ENCODE measurements at regions of chr2 and their contacts with region 1.

Region 1: DNA sequence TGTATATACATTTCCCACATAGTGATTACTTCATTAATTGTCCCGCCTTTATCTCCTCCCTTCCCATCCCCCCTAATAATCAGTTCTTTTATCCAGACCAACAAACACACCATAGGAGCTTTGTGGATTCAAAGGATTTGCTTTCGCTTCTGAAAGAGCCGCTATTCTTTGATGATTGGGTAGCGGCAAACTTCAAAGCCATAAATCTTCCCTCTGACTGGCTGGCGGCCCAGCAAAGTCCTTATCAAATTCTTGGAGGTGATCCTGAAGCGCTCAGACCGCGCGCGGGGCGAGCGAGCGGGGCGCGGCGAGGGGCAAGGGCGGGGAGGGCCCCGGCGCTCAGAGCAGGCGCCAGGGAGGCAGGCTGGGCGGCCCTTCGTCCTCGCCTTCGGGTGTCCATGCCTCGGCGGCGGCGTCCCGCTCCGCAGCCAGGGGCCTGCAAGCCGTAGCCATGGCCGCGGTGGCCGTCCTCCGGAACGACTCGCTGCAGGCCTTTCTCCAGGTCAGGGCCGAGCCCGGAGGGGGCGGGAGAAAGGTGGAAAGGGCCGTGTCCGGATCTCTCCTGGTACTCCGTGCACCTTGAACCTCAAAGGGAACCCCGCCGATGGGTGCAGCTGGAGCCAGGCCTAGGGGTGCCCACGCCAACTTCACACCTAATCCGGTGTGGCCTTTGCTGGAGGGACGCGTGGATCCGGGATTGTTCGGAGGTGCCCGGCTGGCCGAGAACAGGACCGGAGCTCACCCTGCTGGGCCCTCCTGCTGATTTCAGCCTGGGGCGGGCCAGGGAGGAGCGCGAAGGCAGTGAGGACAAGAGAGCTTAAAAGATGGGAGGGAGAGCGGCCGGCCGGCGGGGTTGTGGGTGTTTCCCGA is at the start of gene SP5:
- DNase-seq: peak in 4 of 5 donors; percentile 19 to 71 (median 34)
- ATAC-seq: peak in 3 of 4 donors; percentile 46 to 59 (median 47)
- H3K4me3 ChIP-seq: peak within 1 kb of the TSS; percentile 42 to 63 (median 54)
- H3K27ac ChIP-seq: peak within 1 kb of the TSS in 5 of 12 donors; percentile 2 to 40 (median 36)
- H3K4me1 ChIP-seq: peaks cover 0 to 50% (median 26%) of the 10 kb centered on the region in 12 donors
- H3K27me3 ChIP-seq: peaks cover 49 to 100% (median 93%) of the 10 kb centered on the region in 9 donors
- CTCF ChIP-seq: peak in 1 of 12 donors; percentile 9
- POLR2A ChIP-seq: no peak
- total RNA-seq, gene SP5: 0.16 to 1.4 (median 0.28) TPM in 5 of 9 donors, not detected in the others

Region 2: DNA sequence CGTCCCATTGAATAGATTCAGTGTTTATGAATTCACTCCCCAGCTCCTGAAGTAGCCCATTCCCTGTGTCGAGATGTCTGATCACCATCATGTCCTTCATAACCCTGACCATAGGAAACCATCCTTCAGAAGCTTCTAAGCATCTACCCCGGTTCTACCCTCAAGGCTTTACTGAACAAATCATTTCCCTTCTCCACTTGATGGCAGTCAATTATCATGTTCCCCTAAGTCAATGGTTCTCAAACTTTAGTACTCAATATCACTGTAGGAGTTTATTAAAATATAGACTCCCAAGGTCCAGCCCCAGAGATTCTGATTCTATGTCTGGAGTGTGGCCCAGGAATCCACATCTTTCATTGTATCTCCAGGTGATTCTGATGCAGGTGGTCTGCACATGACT is 228.6 kb before region 1 on chr2:
- intact Hi-C with region 1: loop called in 5 of 10 experiments (anchors 5 to 10 kb)
- DNase-seq: no peak
- ATAC-seq: peak in 2 of 4 donors; percentile 48 to 50
- H3K4me3 ChIP-seq: no peak overlapping the region
- H3K27ac ChIP-seq: no peak overlapping the region
- H3K4me1 ChIP-seq: no peaks in the 10 kb centered on the region
- H3K27me3 ChIP-seq: no peaks in the 10 kb centered on the region
- CTCF ChIP-seq: peak in 8 of 12 donors; percentile 23 to 57 (median 42)
- POLR2A ChIP-seq: no peak

Region 3: DNA sequence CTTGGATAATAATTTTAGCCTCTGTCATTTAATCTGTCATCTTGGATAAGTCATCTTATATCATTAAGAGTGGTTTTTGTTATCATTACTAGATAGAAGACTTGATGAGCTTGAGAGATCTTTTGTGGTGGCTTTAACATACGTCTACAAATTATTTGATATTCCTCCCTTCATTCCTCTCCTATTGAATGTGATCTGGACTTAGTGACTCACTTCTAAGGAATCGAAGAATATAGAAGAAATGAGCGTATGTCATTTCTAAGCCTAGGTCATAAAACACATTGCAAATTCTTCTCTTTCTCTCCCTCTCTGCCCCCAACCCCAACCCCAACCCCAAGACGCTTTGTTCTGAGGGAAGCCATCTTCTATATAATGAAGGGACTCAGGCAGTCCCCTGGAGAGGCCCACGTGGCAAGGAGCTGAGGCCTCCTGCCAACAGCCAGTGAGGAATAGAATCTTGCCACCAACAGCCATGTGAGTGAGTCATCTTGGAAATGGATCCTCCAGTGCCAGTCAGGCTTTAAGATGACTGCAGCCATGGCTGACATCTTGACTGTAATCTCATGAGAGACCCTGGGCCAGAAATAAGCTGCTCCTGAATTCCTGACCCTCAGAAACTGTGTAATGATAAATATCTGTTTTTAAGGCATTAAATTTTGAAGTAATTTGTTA is 221.7 kb before region 1 on chr2:
- intact Hi-C with region 1: loop called in 5 of 10 experiments (anchors 5 to 10 kb)
- DNase-seq: no peak
- ATAC-seq: no peak
- H3K4me3 ChIP-seq: no peak overlapping the region
- H3K27ac ChIP-seq: no peak overlapping the region
- H3K4me1 ChIP-seq: no peaks in the 10 kb centered on the region
- H3K27me3 ChIP-seq: peaks cover 0 to 10% (median 0%) of the 10 kb centered on the region in 9 donors
- CTCF ChIP-seq: no peak
- POLR2A ChIP-seq: no peak

Region 4: DNA sequence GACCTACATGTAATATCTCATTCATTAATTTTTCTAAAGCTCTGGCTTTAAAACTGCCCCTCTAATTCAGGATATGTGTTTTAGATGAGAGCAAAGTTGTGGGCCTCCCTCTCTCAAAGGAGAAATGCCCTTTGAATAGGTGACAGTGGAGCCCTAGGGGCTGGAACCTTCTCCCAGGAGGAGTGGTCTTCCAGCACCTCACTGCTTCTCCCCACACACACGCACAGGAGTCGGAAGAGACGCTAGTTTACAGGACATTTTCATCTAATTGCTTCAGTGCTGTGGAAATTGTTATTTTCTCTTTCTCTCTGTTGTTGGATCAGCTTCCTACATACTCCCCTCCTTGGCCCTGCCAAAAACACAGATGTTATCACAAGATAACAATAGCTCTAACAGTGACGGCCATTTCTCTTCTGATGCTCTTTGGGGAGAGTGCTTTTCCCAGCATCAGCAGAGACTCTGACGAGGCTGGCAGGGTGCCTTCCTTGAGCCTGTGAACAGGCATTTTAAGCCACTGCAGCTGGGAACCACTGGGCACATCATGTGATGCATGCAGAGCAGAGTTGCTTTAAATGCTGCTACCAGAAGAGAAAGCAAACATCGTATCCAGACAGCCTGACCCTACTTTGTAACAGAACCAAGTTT is 209.5 kb before region 1 on chr2:
- intact Hi-C with region 1: loop called in 2 of 10 experiments (anchors 10 kb)
- DNase-seq: peak; percentile 47 to 72 (median 63)
- ATAC-seq: peak; percentile 51 to 83 (median 70)
- H3K4me3 ChIP-seq: peak overlapping the region in 7 of 12 donors; percentile 12 to 29 (median 20)
- H3K27ac ChIP-seq: peak overlapping the region; percentile 6 to 71 (median 46)
- H3K4me1 ChIP-seq: peaks cover 0 to 44% (median 17%) of the 10 kb centered on the region in 12 donors
- H3K27me3 ChIP-seq: peaks cover 0 to 5% (median 0%) of the 10 kb centered on the region in 9 donors
- CTCF ChIP-seq: no peak
- POLR2A ChIP-seq: no peak

Region 5: DNA sequence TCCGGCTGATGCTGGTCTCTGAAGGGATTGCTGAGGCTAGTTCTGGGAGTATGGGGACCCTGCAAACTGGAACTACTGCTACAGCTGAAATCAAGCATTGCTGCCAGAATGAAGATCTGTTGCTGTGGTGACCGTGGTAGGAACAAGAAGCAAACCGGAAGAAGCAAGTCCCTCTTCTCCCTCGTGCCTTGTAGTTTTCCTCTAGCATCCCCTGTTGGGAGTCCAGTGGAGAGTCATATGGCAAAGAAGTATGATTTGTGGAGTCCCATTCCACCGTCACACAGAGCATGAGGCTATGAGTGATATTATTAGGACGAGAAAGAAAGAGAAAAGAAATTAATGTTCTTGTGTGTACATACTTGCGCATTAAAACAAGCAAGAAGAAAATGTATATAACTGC is 139.0 kb before region 1 on chr2:
- intact Hi-C with region 1: no loop called
- DNase-seq: no peak
- ATAC-seq: no peak
- H3K4me3 ChIP-seq: no peak overlapping the region
- H3K27ac ChIP-seq: no peak overlapping the region
- H3K4me1 ChIP-seq: no peaks in the 10 kb centered on the region
- H3K27me3 ChIP-seq: peaks cover 0 to 6% (median 0%) of the 10 kb centered on the region in 9 donors
- CTCF ChIP-seq: peak in 2 of 12 donors; percentile 7 to 12
- POLR2A ChIP-seq: no peak

Region 6: GRCh38 chr2:170770606-170771420 is 55.5 kb after region 1 on chr2:
- intact Hi-C with region 1: no loop called
- DNase-seq: peak; percentile 67 to 90 (median 78)
- ATAC-seq: peak; percentile 90 to 98 (median 96)
- H3K4me3 ChIP-seq: peak overlapping the region; percentile 43 to 91 (median 66)
- H3K27ac ChIP-seq: peak overlapping the region in 8 of 12 donors; percentile 16 to 77 (median 60)
- H3K4me1 ChIP-seq: peaks cover 0 to 15% (median 10%) of the 10 kb centered on the region in 12 donors
- H3K27me3 ChIP-seq: peaks cover 0 to 17% (median 0%) of the 10 kb centered on the region in 9 donors
- CTCF ChIP-seq: no peak
- POLR2A ChIP-seq: no peak

Region 7: GRCh38 chr2:171163261-171163660 is 448.0 kb after region 1 on chr2:
- intact Hi-C with region 1: no loop called
- DNase-seq: no peak
- ATAC-seq: no peak
- H3K4me3 ChIP-seq: no peak overlapping the region
- H3K27ac ChIP-seq: peak overlapping the region in 1 of 12 donors; percentile 54
- H3K4me1 ChIP-seq: peaks cover 0 to 33% (median 8%) of the 10 kb centered on the region in 12 donors
- H3K27me3 ChIP-seq: no peaks in the 10 kb centered on the region
- CTCF ChIP-seq: no peak
- POLR2A ChIP-seq: no peak